ENCODE measurements at regions of chr1 and their contacts with region 1.

Region 1: GRCh38 chr1:904310-904950 is 19.3 kb upstream of the SAMD11 start:
- DNase-seq: peak; percentile 81 to 91
- ATAC-seq: peak; percentile 86 to 96 (median 93)
- H3K4me3 ChIP-seq: peak overlapping the region; percentile 53
- H3K27ac ChIP-seq: no peak overlapping the region
- H3K4me1 ChIP-seq: peaks cover 5% of the 10 kb centered on the region
- H3K27me3 ChIP-seq: peaks cover 0 to 42% (median 18%) of the 10 kb centered on the region in 3 donors
- CTCF ChIP-seq: peak; percentile 89

Region 2: GRCh38 chr1:938711-939489 is 34.5 kb after region 1 on chr1:
- intact Hi-C with region 1: loop called in 1 of 2 experiments (anchors 1 kb)
- DNase-seq: no peak
- ATAC-seq: no peak
- H3K4me3 ChIP-seq: no peak overlapping the region
- H3K27ac ChIP-seq: no peak overlapping the region
- H3K4me1 ChIP-seq: peaks cover 26% of the 10 kb centered on the region
- H3K27me3 ChIP-seq: peaks cover 0 to 86% (median 37%) of the 10 kb centered on the region in 3 donors
- CTCF ChIP-seq: no peak

Region 3: GRCh38 chr1:975896-976683 is 71.7 kb after region 1 on chr1:
- intact Hi-C with region 1: loop called in 1 of 2 experiments (anchors 5 kb)
- DNase-seq: peak; percentile 41 to 75
- ATAC-seq: peak in 3 of 4 donors; percentile 1 to 33 (median 8)
- H3K4me3 ChIP-seq: peak overlapping the region; percentile 28
- H3K27ac ChIP-seq: peak overlapping the region; percentile 75
- H3K4me1 ChIP-seq: peaks cover 27% of the 10 kb centered on the region
- H3K27me3 ChIP-seq: peaks cover 0 to 6% (median 0%) of the 10 kb centered on the region in 3 donors
- CTCF ChIP-seq: peak; percentile 39

Region 4: DNA sequence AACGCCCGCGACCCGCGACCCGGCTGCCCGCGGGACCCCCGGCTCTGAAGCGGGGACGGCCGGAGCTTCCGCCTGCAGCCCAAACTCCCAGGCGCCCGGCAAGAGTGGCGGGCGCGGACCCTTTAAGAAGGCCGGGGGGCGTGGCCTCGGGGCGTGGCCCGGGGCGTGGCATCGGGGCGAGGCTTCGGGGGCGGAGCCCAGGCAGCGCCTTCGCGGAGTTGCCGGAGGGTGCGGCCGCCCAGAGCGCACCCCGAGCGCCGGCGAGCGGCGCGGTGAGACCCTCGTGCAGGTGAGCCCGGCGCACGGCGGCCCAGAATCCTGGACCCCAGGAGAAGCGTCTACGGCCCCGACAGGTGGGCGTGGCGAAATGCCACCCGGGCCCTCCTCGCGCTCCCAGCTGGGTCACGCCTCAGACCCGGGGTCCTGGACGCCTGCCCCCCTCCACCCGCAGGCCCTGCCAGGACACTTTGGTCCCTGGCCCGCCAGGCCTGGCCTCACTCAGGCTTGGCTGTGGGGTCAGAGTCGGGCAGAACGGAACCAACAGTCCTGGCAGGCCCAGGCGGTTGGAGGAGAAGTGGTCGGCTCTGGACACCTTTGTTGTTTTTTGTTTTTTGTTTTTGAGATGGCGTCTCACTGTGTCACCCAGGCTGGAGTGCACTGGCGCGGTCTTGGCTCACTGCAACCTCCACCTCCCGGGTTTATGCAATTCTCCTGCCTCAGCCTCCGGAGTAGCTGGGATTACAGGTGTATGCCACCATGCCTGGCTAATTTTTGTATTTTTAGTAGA is 155.3 kb after region 1 on chr1:
- intact Hi-C with region 1: loop called in 1 of 2 experiments (anchors 2 kb)
- DNase-seq: peak; percentile 89 to 94
- ATAC-seq: peak; percentile 90 to 97 (median 94)
- H3K4me3 ChIP-seq: peak overlapping the region; percentile 72
- H3K27ac ChIP-seq: no peak overlapping the region
- H3K4me1 ChIP-seq: no peaks in the 10 kb centered on the region
- H3K27me3 ChIP-seq: peaks cover 0 to 74% (median 34%) of the 10 kb centered on the region in 3 donors
- CTCF ChIP-seq: no peak